ENCODE measurements at regions of chr17 and their contacts with region 1.

Region 1: DNA sequence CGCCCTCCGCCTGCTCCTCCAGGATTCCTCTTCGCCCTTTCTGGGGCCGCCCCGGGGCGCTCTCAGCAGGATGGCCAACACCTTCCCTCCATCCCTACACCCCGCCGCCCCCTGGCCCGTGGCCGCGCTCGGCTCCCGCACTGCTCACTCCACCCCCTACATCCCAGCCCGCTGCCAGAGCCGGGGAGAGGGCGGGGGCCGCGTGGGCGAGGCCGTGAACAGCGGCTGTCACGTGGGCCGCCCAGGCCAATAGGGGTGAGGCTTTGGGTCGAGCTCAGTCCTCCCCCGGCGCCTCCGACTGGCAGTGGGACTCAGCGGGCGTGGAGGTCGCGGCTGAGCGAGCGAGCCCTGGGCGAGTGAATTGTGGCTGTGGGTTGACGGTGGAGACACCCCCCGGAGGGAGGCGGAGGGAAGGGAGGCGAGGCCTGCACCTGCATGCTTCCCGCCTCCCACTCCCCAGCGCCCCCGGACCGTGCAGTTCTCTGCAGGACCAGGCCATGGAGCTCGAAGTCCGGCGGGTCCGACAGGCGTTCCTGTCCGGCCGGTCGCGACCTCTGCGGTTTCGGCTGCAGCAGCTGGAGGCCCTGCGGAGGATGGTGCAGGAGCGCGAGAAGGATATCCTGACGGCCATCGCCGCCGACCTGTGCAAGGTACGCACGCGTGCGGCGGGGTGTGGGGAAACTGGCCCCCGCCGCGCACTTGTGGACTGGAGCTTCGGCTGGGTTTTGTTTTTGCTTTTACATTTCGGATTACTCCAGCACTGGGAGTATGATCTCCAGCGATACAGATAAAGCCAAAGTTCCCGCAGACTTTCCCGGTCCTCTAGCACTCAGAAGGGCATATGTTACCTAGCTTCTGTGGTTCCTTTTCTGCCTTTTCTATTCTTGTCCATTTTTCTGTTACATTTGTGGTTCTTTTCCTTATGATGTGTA is at the start of gene ALDH3A2:
- DNase-seq: peak; percentile 80 to 95 (median 90)
- ATAC-seq: peak; percentile 95
- H3K4me3 ChIP-seq: peak within 1 kb of the TSS; percentile 85
- H3K4me3 Mint-ChIP-seq: peak within 1 kb of the TSS; percentile 95
- H3K27ac ChIP-seq: peak within 1 kb of the TSS; percentile 45 to 61
- H3K27ac Mint-ChIP-seq: peak within 1 kb of the TSS; percentile 88
- H3K4me1 ChIP-seq: peaks cover 23% of the 10 kb centered on the region
- H3K4me1 Mint-ChIP-seq: peaks cover 42% of the 10 kb centered on the region
- H3K27me3 ChIP-seq: no peaks in the 10 kb centered on the region
- H3K27me3 Mint-ChIP-seq: no peaks in the 10 kb centered on the region
- CTCF ChIP-seq: no peak
- total RNA-seq, gene ALDH3A2: 20.0 to 20.9 TPM

Region 2: DNA sequence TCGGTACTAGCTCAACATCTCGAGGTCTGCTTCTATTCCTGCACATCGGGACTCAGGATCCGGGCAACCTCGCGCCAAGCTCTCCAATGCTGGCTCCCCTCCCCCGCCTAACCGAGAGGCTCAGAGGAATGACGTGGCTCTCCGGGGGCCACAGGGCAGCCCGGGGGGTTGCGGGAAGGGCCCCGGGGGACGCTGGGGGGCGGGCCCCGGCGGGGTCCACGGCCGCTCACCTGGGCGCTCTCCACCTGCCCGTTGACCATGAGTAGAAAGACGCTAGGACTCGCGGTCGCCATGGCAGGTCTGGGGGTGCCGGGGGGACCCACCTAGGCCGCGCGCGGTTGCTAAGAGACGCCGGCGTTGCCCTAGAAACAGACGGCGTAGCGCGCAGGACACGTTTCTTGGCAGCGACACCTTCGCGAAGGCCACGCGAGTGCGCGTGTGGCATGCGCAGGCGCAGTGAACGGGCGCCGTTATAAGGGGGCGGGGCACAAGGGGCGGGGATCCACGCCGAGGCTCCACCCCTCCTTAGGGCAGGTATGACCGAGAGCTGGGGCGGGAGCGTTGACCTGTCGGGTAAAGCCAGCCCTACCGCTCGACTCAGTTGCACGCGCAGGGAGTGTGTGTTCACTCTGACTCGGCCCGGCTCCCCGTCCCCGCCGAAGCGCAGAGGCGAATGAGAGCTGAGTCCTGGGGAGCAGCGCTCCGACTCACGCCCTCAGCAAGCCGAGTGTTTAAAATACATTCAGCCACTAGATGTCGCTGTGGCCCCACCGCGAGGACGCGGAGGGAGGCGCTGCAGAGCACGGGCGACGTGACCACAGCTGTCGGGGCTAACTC is 286.2 kb before region 1 on chr17 and contains the start of gene B9D1:
- CTCF ChIA-PET with region 1: interaction called, 8 read pairs
- POLR2A ChIA-PET with region 1: interaction called, 7 read pairs
- intact Hi-C with region 1: loop called in 1 of 2 experiments (anchors 5 kb)
- DNase-seq: peak; percentile 91 to 97 (median 94)
- ATAC-seq: peak; percentile 93
- H3K4me3 ChIP-seq: peak within 1 kb of the TSS; percentile 75
- H3K4me3 Mint-ChIP-seq: peak within 1 kb of the TSS; percentile 95
- H3K27ac ChIP-seq: peak within 1 kb of the TSS in 1 of 2 donors; percentile 29
- H3K27ac Mint-ChIP-seq: peak within 1 kb of the TSS; percentile 89
- H3K4me1 ChIP-seq: peaks cover 16% of the 10 kb centered on the region
- H3K4me1 Mint-ChIP-seq: peaks cover 14% of the 10 kb centered on the region
- H3K27me3 ChIP-seq: peaks cover 3 to 4% of the 10 kb centered on the region in 2 experiments
- H3K27me3 Mint-ChIP-seq: peaks cover 5% of the 10 kb centered on the region
- CTCF ChIP-seq: peak; percentile 99
- total RNA-seq, gene B9D1: 0.66 to 0.73 TPM

Region 3: DNA sequence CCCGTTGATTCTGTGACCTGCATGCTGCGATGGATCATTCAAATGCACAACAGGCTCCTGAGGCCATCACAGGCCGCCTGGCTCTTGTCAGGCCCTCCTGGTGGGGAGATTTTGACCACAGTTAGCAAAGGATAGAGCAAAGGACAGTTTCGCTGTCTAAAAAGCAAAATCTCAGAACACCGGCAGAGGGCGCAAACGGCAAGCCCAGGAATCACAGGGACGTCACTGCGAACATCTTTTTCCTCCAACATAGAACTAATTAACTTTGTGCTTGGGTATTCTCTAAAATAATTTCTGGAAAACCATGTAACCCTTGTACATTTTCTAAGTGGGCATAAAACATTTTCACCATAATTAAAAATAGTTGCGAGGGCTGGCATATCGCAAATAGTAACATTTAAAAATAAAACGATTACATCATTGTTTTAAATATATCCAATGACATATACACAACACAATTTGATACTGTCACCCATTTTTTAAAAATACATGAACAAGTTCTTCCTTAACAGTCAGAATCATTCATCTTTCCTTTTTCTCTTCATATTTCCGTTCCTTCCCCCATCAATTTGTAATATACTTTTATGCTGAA is 134.7 kb before region 1 on chr17:
- CTCF ChIA-PET with region 1: interaction called, 3 read pairs
- POLR2A ChIA-PET with region 1: interaction called, 5 read pairs
- intact Hi-C with region 1: loop called (anchors 5 kb)
- DNase-seq: peak; percentile 42 to 84 (median 62)
- ATAC-seq: peak; percentile 75
- H3K4me3 ChIP-seq: no peak overlapping the region
- H3K4me3 Mint-ChIP-seq: no peak overlapping the region
- H3K27ac ChIP-seq: no peak overlapping the region
- H3K27ac Mint-ChIP-seq: peak overlapping the region; percentile 12
- H3K4me1 ChIP-seq: peaks cover 4% of the 10 kb centered on the region
- H3K4me1 Mint-ChIP-seq: peaks cover 6% of the 10 kb centered on the region
- H3K27me3 ChIP-seq: no peaks in the 10 kb centered on the region
- H3K27me3 Mint-ChIP-seq: no peaks in the 10 kb centered on the region
- CTCF ChIP-seq: peak; percentile 94

Region 4: DNA sequence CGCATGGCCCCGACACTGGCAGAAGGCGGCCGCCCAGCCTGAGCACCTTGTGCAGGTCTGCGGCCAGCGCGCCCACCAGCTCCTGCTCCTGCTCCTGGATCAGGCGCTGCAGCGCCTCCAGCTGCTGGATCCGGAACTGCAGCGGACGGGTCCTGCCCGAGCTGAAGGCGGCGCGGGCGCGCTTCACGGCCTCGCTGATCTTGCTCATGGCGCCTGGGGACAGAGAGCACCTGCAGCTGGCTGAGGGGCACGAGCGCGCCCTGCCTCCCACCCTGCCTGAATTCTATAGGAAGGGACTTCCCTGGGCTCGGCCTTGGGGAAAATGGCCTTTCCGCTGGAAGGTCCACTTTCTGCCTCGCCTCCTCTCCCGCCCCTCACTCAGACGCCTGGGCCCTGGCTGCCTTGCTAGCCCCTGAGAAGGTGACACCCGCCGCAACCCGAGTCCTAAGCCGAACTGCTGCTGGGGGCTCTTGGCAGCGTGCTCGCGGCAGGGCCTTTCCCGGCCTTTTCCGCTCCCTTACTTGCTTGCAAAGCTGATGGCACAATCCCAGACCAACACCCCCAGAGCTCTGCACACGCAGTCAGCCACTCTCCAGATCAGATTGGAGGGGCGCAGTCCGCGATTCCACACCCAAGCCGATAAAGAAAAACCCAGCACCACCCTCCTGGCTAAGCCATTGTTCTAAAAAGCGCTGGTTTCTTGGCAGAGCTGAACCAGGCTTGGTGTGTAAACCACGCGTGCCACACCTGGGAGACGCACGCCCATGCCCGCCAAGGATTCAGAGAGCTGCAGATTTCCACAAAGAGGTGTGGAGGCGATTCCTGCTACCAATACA is 96.4 kb after region 1 on chr17:
- CTCF ChIA-PET with region 1: interaction called, 3 read pairs
- POLR2A ChIA-PET with region 1: interaction called, 16 read pairs
- intact Hi-C with region 1: loop called in 1 of 2 experiments (anchors 5 kb)
- DNase-seq: peak; percentile 75 to 91 (median 86)
- ATAC-seq: peak; percentile 99
- H3K4me3 ChIP-seq: peak overlapping the region; percentile 35
- H3K4me3 Mint-ChIP-seq: peak overlapping the region; percentile 66
- H3K27ac ChIP-seq: no peak overlapping the region
- H3K27ac Mint-ChIP-seq: no peak overlapping the region
- H3K4me1 ChIP-seq: peaks cover 11% of the 10 kb centered on the region
- H3K4me1 Mint-ChIP-seq: peaks cover 14% of the 10 kb centered on the region
- H3K27me3 ChIP-seq: no peaks in the 10 kb centered on the region
- H3K27me3 Mint-ChIP-seq: no peaks in the 10 kb centered on the region
- CTCF ChIP-seq: peak; percentile 84

Region 5: DNA sequence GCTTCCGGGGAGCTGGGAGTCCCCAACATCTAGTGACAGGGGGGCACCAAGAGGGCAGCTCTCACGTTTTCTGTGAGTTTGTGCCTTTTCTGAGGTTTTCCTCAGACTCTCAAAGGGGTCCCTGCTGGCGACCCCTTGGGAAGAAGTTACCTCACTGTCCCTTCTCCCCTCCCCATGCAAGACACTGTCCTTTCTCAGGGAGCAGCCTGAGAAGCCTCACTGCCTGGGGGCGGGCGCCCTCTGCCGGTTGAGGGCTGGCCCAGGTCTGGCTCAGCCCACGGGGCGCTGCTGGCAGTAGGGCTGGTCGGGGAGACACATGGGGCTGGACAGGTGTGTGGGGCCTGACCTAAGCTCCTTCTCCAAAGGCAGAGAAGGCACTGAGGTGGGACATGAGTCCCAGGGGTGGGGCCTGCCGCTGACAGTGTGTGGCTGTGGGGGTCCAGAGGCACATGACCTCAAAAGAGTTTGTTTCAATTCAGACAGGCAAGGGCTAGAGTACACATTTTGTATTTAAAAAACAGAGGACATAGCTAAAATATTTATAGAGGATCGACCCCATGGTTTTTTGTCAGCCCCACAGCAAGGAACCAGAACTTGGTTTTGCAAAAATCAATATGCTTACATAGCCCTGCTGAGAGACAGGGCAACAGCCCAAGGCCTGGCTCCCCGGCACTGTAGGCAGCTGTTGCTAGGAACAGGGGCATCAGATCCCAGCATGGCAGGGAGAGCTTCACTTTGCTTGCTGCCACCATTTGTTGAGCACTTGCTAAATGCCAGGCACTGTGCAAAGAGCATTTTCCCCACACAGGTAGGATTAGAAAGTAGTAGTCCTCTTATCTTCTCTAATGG is 117.9 kb after region 1 on chr17:
- CTCF ChIA-PET with region 1: interaction called, 7 read pairs
- POLR2A ChIA-PET with region 1: interaction called, 19 read pairs
- intact Hi-C with region 1: loop called (anchors 5 kb)
- DNase-seq: peak; percentile 62 to 89 (median 78)
- ATAC-seq: peak; percentile 80
- H3K4me3 ChIP-seq: no peak overlapping the region
- H3K4me3 Mint-ChIP-seq: peak overlapping the region; percentile 17
- H3K27ac ChIP-seq: no peak overlapping the region
- H3K27ac Mint-ChIP-seq: peak overlapping the region; percentile 84
- H3K4me1 ChIP-seq: peaks cover 54% of the 10 kb centered on the region
- H3K4me1 Mint-ChIP-seq: peaks cover 52% of the 10 kb centered on the region
- H3K27me3 ChIP-seq: no peaks in the 10 kb centered on the region
- H3K27me3 Mint-ChIP-seq: no peaks in the 10 kb centered on the region
- CTCF ChIP-seq: peak; percentile 97

Region 6: GRCh38 chr17:19977311-19978208 is 328.8 kb after region 1 on chr17 and contains the start of gene AKAP10:
- CTCF ChIA-PET with region 1: no interaction called
- POLR2A ChIA-PET with region 1: interaction called, 13 read pairs
- intact Hi-C with region 1: no loop called
- DNase-seq: peak; percentile 85 to 94 (median 91)
- ATAC-seq: peak; percentile 83
- H3K4me3 ChIP-seq: peak within 1 kb of the TSS; percentile 83
- H3K4me3 Mint-ChIP-seq: peak within 1 kb of the TSS; percentile 99
- H3K27ac ChIP-seq: peak within 1 kb of the TSS; percentile 83 to 85
- H3K27ac Mint-ChIP-seq: peak within 1 kb of the TSS; percentile 97
- H3K4me1 ChIP-seq: peaks cover 43% of the 10 kb centered on the region
- H3K4me1 Mint-ChIP-seq: peaks cover 59% of the 10 kb centered on the region
- H3K27me3 ChIP-seq: no peaks in the 10 kb centered on the region
- H3K27me3 Mint-ChIP-seq: no peaks in the 10 kb centered on the region
- CTCF ChIP-seq: no peak
- total RNA-seq, gene AKAP10: 29.2 to 36.0 TPM

Measured in CD4-positive, alpha-beta T cell (primary cell).